ENCODE measurements at regions of chr1 and their contacts with region 1.

Region 1: GRCh38 chr1:95497566-95497965 is 263.6 kb downstream of the RWDD3 start:
- DNase-seq: no peak

Region 2: DNA sequence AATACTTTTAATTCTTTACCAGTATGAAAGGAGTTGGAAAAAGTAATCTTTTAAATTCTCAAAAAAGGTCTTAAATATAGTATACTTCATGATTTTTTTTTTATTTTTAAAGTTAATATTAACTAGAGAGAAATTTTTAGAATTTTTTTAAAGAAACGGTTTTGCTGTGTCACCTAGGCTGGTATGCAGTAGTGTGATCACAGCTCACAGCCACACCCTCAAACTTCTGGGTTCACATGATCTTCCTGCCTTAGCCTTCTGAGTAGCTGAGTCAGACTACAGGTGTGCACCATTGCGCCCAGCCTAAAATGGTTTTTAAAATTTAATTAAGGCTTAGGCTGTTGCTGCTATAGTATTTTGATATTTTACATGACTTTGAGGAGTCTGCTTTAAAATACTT is 328.0 kb before region 1 on chr1:
- intact Hi-C with region 1: loop called in 1 of 2 experiments (anchors 5 kb)
- DNase-seq: no peak

Region 3: DNA sequence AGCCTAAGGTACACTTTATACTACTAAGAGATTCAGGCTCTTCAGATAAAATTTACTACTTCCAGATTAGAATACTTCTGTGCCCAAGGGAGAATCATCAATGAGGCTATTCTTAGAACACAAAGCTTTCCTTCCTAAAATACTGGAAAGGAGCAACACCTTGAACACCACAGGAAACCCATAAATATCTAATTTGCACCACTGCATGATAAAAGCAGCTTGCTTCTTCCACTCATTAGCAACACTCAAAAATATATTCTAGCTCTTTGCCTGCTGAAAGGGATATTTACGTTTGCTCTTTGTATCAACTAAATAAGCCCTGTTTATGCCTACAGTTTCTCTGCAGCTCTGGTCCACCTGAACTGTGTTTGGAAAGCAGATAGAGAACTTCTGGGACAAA is 20.7 kb after region 1 on chr1:
- intact Hi-C with region 1: no loop called
- DNase-seq: no peak

Region 4: GRCh38 chr1:95547005-95547404 is 49.4 kb after region 1 on chr1:
- intact Hi-C with region 1: no loop called
- DNase-seq: no peak